ENCODE measurements at regions of chr1 and their contacts with region 1.

Region 1: DNA sequence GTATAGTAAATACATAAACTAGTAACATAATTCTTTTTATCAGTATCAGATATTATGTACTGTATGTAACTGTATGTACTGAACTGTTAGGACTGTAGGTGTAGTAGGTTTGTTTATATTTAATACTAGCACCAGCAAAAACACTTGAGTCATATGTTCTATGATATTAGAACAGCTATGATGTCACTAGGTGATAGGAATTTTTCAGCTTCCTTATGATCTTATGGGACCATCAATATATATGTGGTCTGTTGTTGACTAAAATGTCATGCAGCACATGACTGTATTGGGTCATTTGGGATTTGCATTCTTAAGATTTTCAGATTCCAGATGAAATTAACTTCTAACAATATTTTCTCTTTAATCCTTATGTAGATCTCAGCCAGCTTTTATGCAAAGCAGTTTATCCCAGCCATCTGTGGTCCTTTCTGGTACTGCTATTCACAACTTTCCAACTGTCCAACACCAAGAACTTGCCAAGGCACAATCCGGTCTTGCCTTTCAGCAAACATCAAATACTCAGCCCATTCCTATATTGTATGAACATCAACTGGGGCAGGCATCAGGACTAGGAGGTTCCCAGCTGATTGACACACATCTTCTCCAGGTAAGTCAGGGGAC is 38.4 kb upstream of the MYOCOS start:
- DNase-seq: no peak
- ATAC-seq: no peak
- H3K4me3 ChIP-seq: peak overlapping the region; percentile 7
- H3K4me1 ChIP-seq: no peaks in the 10 kb centered on the region
- CTCF ChIP-seq: no peak

Region 2: GRCh38 chr1:171515299-171515698 is 68.4 kb before region 1 on chr1:
- intact Hi-C with region 1: loop called (anchors 10 kb)
- DNase-seq: no peak
- ATAC-seq: no peak
- H3K4me3 ChIP-seq: no peak overlapping the region
- H3K4me1 ChIP-seq: peaks cover 3% of the 10 kb centered on the region
- CTCF ChIP-seq: no peak

Region 3: DNA sequence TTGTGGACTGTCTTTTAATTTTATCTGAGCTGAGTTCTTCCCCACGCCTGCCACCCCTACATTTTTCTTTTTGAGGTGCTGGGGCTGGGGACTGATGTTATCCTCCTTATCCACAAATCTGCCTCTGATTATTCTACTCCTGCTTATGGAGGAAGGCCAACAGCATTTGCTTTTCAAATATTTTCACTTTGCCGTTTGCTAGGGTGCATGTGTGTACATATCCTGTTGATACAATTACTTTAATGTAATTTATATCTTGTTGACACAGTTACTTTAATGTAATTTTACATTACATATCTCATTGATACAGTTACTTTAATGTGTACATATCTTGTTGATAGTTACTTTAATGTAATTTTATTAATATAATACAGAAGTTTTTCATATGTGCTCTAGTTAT is 62.1 kb before region 1 on chr1:
- intact Hi-C with region 1: loop called (anchors 10 kb)
- DNase-seq: no peak
- ATAC-seq: no peak
- H3K4me3 ChIP-seq: no peak overlapping the region
- H3K4me1 ChIP-seq: no peaks in the 10 kb centered on the region
- CTCF ChIP-seq: no peak

Region 4: DNA sequence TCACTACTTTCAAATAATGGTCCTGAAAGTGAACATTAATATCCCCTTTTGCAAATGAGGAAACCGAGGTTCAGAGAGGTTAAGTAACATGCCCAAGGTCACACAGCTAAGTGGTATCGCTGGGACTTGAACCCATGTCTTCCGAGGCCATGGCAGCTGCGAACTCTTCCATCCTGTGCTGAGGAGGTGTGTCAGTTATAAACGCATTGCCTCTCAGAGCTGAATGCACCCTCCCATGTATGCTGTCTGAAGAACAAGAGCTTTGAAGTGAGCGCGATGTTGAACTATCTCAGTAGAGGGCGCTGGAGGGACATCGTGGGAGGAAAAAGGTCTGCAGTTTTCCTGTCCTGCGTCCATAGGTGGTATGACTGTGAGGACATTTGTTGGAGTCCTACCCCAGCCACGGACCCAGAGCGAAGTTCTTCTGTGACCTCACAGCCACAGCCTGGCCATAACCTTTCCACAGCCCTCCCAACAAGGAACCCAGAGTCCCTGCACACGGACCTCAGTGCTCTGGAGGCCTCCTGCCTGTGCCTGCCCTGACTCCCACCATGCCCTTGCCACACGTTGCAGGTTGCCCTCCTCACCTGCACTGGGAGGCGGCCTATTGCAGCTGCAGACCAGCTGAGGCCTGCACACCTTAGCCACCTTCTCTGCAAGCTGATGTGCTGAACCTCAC is 61.3 kb after region 1 on chr1:
- intact Hi-C with region 1: no loop called
- DNase-seq: peak; percentile 55 to 88 (median 72)
- ATAC-seq: peak; percentile 97
- H3K4me3 ChIP-seq: no peak overlapping the region
- H3K4me1 ChIP-seq: no peaks in the 10 kb centered on the region
- CTCF ChIP-seq: peak; percentile 60